ENCODE measurements at regions of chr12 and their contacts with region 1.

Region 1: DNA sequence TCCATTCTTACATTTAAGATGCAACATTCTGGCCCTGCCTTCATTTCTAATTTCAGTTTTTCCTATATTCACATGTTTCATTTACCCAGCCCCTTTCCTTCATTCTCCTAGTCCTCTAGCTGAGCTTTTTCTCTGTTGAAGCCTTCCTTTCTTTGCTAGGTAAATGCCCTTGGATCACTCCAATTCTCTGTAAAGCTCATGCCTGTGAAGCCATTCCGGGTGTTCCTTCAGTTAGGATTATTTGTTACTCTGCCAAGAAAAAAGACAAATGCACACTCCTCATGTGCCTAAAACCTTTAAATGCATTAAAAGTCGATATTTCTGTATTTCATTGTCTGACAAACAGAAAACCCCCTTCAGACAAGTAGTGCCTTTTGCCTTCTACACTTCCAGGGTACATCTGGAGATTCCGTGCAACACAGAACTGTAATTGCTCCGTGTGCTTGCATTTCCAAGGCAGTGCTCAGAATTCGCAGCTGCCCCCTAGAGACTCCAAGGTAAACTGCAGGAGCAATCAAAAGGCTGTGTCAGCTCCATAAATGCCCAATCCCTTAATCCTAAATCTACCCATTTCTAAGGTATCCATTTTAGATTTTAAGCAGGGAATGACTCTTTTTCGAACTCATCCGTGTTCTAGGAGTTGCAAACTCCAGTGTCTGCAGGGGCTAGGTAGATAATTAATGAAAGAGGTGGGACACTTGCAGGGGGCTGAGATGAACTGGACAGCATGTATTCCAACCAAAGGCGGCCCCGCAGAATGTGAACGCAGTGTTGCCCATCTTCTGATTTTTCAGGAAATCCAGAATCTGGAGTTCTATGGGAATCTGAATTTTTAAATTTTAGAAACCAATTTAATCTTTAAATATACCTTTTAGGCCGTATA is 320.2 kb downstream of the GRIN2B start:
- DNase-seq: peak; percentile 55 to 63 (median 58)
- ATAC-seq: peak; percentile 78
- H3K4me3 ChIP-seq: no peak overlapping the region
- H3K27ac ChIP-seq: no peak overlapping the region
- H3K4me1 ChIP-seq: no peaks in the 10 kb centered on the region
- H3K27me3 ChIP-seq: no peaks in the 10 kb centered on the region
- CTCF ChIP-seq: peak; percentile 73 to 80 (median 76)
- POLR2A ChIP-seq: no peak

Region 2: GRCh38 chr12:13278249-13278787 is 382.9 kb before region 1 on chr12:
- intact Hi-C with region 1: loop called (anchors 10 kb)
- DNase-seq: peak; percentile 64 to 80 (median 74)
- ATAC-seq: peak; percentile 91
- H3K4me3 ChIP-seq: no peak overlapping the region
- H3K27ac ChIP-seq: no peak overlapping the region
- H3K4me1 ChIP-seq: peaks cover 7% of the 10 kb centered on the region
- H3K27me3 ChIP-seq: no peaks in the 10 kb centered on the region
- CTCF ChIP-seq: peak; percentile 81 to 98 (median 93)
- POLR2A ChIP-seq: no peak

Region 3: DNA sequence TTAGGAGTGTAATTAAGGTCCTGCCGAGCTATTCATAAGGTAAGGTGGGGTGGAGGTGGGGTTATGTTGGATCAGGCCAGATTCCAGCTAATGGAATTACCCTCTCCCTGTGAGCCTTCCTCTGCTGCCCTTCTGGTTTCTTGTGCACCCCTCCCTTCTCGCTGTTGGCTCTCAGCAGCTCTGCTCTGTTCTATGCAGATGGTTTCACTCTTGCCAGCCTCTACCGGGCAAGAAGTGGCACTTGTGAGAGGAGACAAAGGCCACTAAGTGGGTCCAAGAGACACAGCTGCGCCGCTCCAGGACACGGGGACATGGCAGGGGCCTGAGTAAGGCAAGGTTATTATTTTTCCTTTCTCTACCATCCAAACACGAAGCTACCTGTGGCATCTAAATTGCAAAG is 130.3 kb before region 1 on chr12:
- intact Hi-C with region 1: no loop called
- DNase-seq: no peak
- ATAC-seq: no peak
- H3K4me3 ChIP-seq: no peak overlapping the region
- H3K27ac ChIP-seq: no peak overlapping the region
- H3K4me1 ChIP-seq: no peaks in the 10 kb centered on the region
- H3K27me3 ChIP-seq: no peaks in the 10 kb centered on the region
- CTCF ChIP-seq: no peak
- POLR2A ChIP-seq: no peak

Region 4: DNA sequence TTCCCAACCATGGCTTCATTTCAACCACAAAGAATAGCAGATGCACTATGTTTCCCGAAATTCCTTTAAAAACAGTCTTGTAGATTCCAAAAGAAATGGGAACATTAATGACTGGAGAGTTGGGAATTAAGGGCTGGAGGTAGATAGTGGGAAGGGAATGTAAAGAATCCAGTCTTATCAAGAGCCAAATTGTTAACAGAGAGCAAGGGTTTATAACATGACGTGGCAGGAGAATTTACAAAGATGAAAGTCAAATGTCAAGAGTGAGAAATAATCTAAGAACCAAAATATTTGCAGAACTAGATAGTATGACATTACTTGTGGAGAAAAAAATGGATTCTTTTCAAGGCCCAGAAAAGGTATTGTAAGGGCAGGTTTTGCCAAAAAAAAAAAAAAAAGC is 119.2 kb after region 1 on chr12:
- intact Hi-C with region 1: no loop called
- DNase-seq: no peak
- ATAC-seq: no peak
- H3K4me3 ChIP-seq: no peak overlapping the region
- H3K27ac ChIP-seq: no peak overlapping the region
- H3K4me1 ChIP-seq: no peaks in the 10 kb centered on the region
- H3K27me3 ChIP-seq: no peaks in the 10 kb centered on the region
- CTCF ChIP-seq: no peak
- POLR2A ChIP-seq: no peak